K562 (cell line): ENCODE measurements at regions of chr22 and their contacts with region 1.

Region 1: GRCh38 chr22:21690401-21690801 is 24.6 kb downstream of the PPIL2 start:
- DNase-seq: no peak
- ATAC-seq: no peak
- H3K4me3 ChIP-seq: no peak overlapping the region
- H3K27ac ChIP-seq: no peak overlapping the region
- H3K4me1 ChIP-seq: peaks cover 5 to 58% of the 10 kb centered on the region in 2 experiments; a peak in 3 of 5 replicates
- H3K27me3 ChIP-seq: no peaks in the 10 kb centered on the region
- CTCF ChIP-seq: no peak
- EP300 ChIP-seq: no peak
- POLR2A ChIP-seq: no peak
- RAD21 ChIP-seq: no peak

Region 2: GRCh38 chr22:21587803-21588611 is 102.4 kb before region 1 on chr22:
- CTCF ChIA-PET with region 1: no interaction called
- POLR2A ChIA-PET with region 1: no interaction called
- in situ Hi-C with region 1: no loop called
- intact Hi-C with region 1: no loop called
- DNase-seq: peak in 3 of 4 experiments; percentile 74 to 96 (median 93)
- ATAC-seq: peak; percentile 71
- H3K4me3 ChIP-seq: no peak overlapping the region
- H3K27ac ChIP-seq: peak overlapping the region; percentile 7
- H3K4me1 ChIP-seq: peaks cover 34 to 38% of the 10 kb centered on the region in 2 experiments
- H3K27me3 ChIP-seq: no peaks in the 10 kb centered on the region; a peak in 1 of 5 replicates
- CTCF ChIP-seq: no peak
- EP300 ChIP-seq: peak; percentile 88
- POLR2A ChIP-seq: no peak
- RAD21 ChIP-seq: peak; percentile 34 to 46

Region 3: DNA sequence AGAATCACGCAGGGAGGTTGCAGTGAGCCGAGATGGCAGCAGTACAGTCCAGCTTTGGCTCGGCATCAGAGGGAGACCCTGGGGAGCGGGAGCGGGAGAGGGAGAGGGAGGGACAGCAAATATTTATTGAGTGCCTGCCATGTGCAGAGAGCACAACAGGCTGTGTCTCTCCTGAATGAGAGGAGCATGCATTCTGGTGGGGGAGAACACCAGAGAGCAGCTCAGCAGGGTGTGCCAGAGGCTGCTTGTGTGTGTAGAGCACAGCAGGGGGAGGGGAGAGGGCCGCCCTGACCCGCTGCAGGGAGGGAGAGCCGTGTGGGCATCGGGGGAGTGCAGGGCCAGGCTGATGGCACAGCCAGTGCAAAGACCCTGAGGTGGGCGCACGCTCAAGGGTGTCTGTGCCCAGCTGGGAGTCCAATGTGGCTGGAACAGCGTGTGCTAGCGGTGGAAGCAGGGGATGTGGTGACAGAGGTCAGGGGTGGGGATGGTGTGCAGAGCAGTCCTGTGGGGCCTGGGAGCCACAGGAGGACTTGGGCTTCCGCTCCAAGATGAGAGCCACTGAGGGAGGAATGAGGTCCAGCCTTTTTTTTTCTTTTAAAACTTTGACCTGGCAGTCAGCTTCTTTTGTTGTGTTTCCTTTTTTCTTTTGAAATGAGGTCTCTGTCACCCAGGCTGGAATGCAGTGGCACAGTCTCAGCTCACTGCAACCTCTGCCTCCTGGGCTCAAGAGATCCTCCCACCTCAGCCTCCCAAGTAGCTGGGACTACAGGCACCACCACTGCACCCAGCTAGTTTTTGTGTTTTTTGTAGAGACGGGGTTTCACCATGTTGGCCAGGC is 12.6 kb before region 1 on chr22:
- CTCF ChIA-PET with region 1: interaction called, 4 read pairs
- POLR2A ChIA-PET with region 1: interaction called, 52 read pairs
- in situ Hi-C with region 1: no loop called
- intact Hi-C with region 1: no loop called
- DNase-seq: peak in 1 of 4 experiments; percentile 56
- ATAC-seq: peak; percentile 11
- H3K4me3 ChIP-seq: no peak overlapping the region
- H3K27ac ChIP-seq: no peak overlapping the region
- H3K4me1 ChIP-seq: peaks cover 0 to 29% of the 10 kb centered on the region in 2 experiments; a peak in 2 of 5 replicates
- H3K27me3 ChIP-seq: no peaks in the 10 kb centered on the region
- CTCF ChIP-seq: no peak
- EP300 ChIP-seq: no peak
- POLR2A ChIP-seq: peak; percentile 68
- RAD21 ChIP-seq: no peak

Region 4: GRCh38 chr22:21807544-21808529 is 117.4 kb after region 1 on chr22:
- CTCF ChIA-PET with region 1: no interaction called
- POLR2A ChIA-PET with region 1: no interaction called
- in situ Hi-C with region 1: no loop called
- intact Hi-C with region 1: no loop called
- DNase-seq: no peak
- ATAC-seq: no peak; the same call in 2 of the 3 replicates
- H3K4me3 ChIP-seq: no peak overlapping the region
- H3K27ac ChIP-seq: no peak overlapping the region
- H3K4me1 ChIP-seq: 0 out of 5 replicates have a peak, but pooled peaks cover 0 to 4% of the 10 kb centered on the region in 2 experiments
- H3K27me3 ChIP-seq: no peaks in the 10 kb centered on the region
- CTCF ChIP-seq: no peak
- EP300 ChIP-seq: no peak
- POLR2A ChIP-seq: no peak
- RAD21 ChIP-seq: no peak

Region 5: DNA sequence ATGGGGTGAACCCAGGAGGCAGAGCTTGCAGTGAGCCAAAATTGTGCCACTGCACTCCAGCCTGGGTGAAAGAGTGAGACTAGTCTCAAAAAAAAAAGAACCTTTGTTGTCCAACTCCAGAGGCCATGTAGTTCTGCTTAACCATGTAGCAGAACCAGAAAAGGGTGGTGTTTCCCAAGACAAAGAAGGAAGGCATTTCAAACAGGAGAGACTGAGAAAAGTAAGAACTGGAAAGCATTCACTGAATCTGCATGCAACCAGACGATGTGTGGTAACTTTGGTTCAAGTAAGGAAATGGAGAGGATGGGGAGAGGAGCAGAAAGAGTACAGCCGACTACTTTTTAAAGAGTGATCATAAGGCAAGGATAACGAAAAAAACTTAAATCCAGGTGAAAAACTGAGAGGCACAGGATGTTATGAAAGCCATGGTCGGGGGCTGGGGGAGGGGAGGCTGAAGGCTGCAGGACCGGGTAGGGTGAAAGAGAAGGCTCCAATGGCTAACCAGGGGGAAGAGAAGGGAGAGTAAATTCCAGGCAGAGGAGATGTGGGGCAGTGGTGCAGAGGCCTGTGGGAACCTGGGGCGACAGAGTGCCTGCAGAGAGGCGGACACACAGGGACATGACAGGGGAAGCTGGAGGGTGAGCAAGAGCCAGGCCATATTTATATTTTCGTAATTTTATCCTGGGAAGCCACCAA is 128.2 kb after region 1 on chr22:
- CTCF ChIA-PET with region 1: no interaction called
- POLR2A ChIA-PET with region 1: no interaction called
- in situ Hi-C with region 1: no loop called
- intact Hi-C with region 1: no loop called
- DNase-seq: peak in 2 of 4 experiments; percentile 56 to 62
- ATAC-seq: peak; percentile 22
- H3K4me3 ChIP-seq: no peak overlapping the region
- H3K27ac ChIP-seq: no peak overlapping the region
- H3K4me1 ChIP-seq: peaks cover 30 to 37% of the 10 kb centered on the region in 2 experiments
- H3K27me3 ChIP-seq: no peaks in the 10 kb centered on the region
- CTCF ChIP-seq: no peak
- EP300 ChIP-seq: no peak
- POLR2A ChIP-seq: no peak
- RAD21 ChIP-seq: no peak